K562 (cell line): ENCODE measurements at regions of chr12 and their contacts with region 1.

Region 1: DNA sequence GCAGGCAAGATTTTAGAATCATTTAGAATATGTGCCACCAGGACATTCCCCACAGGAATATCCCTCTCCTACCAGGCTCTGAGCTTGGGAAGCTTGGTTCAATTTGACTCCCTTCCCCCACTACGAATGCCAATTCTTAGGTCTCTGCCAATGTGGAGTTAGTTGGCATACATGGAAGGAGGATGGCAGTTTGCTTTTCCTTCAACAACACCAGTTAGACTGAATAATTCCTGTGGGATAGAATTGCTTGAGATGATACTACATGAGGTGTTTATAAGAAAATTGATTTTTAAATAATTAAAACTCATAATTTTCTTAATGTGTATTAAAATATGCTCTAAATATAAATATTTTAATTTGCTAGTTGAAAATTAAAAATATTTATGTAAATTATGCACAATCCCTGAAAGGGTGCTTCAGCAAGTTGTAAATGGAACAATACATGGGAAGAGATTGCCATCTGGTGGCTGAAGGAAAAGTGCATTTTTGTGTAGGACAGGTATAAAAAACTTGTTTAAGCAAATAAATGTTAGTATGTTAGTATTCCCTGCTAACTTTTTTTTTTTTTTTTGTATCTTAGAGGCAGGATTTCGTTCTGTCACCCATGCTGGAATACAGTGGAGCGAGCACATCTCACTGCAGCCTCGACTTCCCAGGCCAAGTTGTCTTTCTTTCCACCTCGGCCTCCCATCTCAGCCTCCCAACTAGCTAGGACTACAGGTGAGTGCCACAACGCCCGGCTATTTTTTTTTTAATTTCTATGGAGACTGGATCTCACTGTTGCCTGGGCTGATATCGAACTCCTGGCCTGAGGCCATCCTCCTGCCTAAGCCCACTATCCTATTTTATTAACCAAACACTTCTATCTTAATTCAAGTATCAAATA is 25.8 kb upstream of the STRAP start:
- DNase-seq: peak; percentile 7 to 51 (median 9)
- ATAC-seq: peak; percentile 62
- H3K4me3 ChIP-seq: no peak overlapping the region
- H3K27ac ChIP-seq: no peak overlapping the region
- H3K4me1 ChIP-seq: no peaks in the 10 kb centered on the region
- H3K27me3 ChIP-seq: no peaks in the 10 kb centered on the region
- CTCF ChIP-seq: peak; percentile 39 to 71 (median 44); a peak in 4 of 6 replicates
- EP300 ChIP-seq: no peak
- POLR2A ChIP-seq: no peak
- RAD21 ChIP-seq: peak; percentile 78 to 86

Region 2: DNA sequence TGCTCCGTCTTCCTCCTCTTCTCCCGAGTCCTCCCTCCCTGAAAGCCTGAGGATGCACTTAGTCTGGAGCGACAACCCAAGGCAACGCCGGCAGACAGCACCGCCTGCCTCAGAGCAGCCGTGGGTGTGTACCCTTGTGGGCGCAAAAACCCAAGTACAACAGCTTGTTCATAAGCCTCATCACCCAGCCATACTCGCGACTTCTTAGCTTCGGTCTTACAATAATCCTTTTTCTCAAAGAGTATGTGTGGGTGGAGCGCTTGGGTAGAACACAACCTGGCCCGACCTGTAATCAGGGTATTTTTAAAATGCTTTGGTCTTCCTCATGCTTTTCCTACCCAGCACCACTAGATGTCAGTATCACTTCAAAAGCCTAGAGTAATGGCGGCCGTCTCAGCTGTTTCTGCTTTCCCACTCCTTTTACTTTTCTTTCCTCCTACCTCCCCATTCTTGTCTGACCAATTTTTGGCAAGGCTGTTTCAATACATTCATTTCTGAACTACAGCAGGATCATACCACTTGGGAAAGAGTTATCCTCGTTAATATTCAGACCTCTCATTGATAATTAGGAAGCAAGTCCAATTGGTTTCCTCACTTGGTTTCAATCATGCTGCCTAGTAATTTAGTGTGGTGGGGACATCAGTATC is 266.0 kb before region 1 on chr12:
- CTCF ChIA-PET with region 1: interaction called, 5 read pairs
- POLR2A ChIA-PET with region 1: interaction called, 3 read pairs
- in situ Hi-C with region 1: no loop called
- intact Hi-C with region 1: loop called (anchors 2 kb)
- DNase-seq: peak; percentile 26 to 57 (median 38)
- ATAC-seq: peak; percentile 84
- H3K4me3 ChIP-seq: no peak overlapping the region
- H3K27ac ChIP-seq: no peak overlapping the region
- H3K4me1 ChIP-seq: no peaks in the 10 kb centered on the region; a peak in 1 of 5 replicates
- H3K27me3 ChIP-seq: no peaks in the 10 kb centered on the region
- CTCF ChIP-seq: peak; percentile 48 to 69 (median 63)
- EP300 ChIP-seq: no peak
- POLR2A ChIP-seq: no peak
- RAD21 ChIP-seq: peak; percentile 75 to 85

Region 3: DNA sequence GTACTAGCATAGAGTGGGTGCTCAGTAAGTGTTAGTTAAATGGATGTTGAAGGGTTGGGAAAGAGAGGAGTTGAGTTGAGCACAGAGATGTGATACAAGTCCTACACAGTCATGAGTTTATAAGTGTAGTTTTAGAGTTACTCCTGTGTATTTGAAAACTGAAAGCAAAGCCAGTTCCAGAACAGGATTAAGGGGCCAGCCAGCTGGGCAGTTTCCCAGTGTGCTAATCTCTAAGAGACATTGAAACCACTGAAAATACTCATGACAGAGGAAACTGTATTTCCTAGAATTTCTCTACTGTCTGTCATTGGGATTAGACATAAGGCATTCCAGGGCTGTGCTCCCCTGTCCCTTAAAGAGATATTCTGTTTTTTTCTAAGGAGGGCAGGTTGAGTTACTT is 155.8 kb after region 1 on chr12:
- CTCF ChIA-PET with region 1: no interaction called
- POLR2A ChIA-PET with region 1: no interaction called
- in situ Hi-C with region 1: no loop called
- intact Hi-C with region 1: no loop called
- DNase-seq: peak in 2 of 4 experiments; percentile 4 to 45
- ATAC-seq: no peak
- H3K4me3 ChIP-seq: no peak overlapping the region
- H3K27ac ChIP-seq: no peak overlapping the region
- H3K4me1 ChIP-seq: no peaks in the 10 kb centered on the region
- H3K27me3 ChIP-seq: no peaks in the 10 kb centered on the region
- CTCF ChIP-seq: no peak
- EP300 ChIP-seq: no peak
- POLR2A ChIP-seq: no peak
- RAD21 ChIP-seq: no peak